ENCODE measurements at regions of chr3 and their contacts with region 1.

Region 1: DNA sequence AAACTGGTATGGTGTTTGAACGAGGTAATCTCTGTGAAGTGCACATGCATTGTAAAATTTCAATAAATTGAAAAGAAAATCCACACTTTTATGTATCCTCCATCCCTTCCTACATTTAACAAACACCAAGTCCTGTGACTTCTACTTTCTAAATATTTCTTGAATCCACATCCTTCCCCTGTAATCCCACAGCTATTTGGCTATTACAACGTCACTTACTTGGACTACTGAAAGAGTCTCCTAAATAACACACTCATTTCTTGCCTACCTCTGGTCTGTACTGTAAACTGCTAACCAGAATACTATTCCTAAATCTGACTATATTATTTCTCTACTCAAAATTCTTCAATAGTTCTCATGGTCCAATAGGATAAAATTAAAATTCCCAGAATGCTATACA is 176.1 kb downstream of the NEK10 start:
- DNase-seq: no peak
- H3K4me3 ChIP-seq: no peak overlapping the region
- H3K4me3 Mint-ChIP-seq: no peak overlapping the region
- H3K27ac Mint-ChIP-seq: no peak overlapping the region
- H3K4me1 ChIP-seq: no peaks in the 10 kb centered on the region
- H3K4me1 Mint-ChIP-seq: no peaks in the 10 kb centered on the region
- H3K27me3 ChIP-seq: no peaks in the 10 kb centered on the region
- H3K27me3 Mint-ChIP-seq: no peaks in the 10 kb centered on the region
- CTCF ChIP-seq: no peak

Region 2: DNA sequence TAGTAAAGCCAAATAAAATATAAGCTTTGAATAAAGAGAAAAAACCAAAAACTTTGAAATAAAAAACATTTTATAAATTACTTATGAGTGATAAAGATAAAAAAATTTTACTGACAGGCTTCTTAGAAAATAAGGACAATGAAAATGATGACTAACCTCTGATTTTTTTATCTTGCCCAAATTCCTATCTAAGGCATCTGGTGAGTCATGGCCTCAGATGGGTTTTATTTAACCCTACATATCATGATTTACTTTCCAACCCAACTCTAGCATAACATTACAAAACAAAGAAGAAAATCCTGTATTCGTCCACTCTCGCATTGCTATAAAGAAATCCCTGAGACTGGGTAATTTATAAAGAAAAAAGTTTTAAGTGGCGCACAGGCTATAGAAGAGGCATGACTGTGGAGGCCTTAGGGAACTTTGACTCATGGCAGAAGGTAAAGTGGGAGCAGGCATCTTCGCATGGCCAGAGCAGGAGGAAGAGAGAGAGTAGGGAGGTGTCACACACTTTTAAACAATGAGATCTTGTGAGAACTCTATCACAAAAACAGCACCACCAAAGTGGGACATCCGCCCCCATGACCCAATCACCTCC is 24.0 kb after region 1 on chr3:
- CTCF ChIA-PET with region 1: no interaction called
- POLR2A ChIA-PET with region 1: no interaction called
- intact Hi-C with region 1: loop called (anchors 1 kb)
- DNase-seq: no peak
- H3K4me3 ChIP-seq: no peak overlapping the region
- H3K4me3 Mint-ChIP-seq: no peak overlapping the region
- H3K27ac Mint-ChIP-seq: no peak overlapping the region
- H3K4me1 ChIP-seq: no peaks in the 10 kb centered on the region
- H3K4me1 Mint-ChIP-seq: no peaks in the 10 kb centered on the region
- H3K27me3 ChIP-seq: no peaks in the 10 kb centered on the region
- H3K27me3 Mint-ChIP-seq: no peaks in the 10 kb centered on the region
- CTCF ChIP-seq: no peak

Region 3: DNA sequence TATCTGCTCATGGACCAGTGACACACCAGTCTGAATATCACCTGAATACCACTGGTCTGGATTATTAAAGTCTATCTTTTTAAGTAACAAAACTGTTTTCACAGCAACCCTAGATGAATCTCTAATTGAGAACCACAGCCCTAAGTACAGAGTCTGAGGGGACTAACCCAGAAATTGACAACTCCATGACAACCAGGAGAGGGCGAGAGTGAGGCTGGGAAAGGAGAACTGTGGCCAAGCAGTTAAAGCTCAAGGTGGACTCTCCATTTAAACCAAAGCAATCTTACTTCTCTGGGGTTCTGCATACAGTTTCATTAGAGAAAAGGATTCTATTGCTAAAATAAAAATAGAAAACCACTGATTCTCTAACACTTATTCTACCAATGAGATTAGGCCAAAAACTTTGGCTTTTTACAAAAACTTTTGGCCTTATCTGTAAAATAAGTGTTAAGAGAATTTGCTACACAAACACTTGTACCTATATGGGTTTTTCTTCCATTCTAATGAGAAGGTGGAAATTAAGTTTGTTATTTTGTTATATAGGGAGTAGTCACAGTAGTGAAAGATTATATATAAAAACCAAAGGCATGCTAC is 164.7 kb after region 1 on chr3:
- CTCF ChIA-PET with region 1: no interaction called
- POLR2A ChIA-PET with region 1: no interaction called
- intact Hi-C with region 1: no loop called
- DNase-seq: peak; percentile 49 to 64
- H3K4me3 ChIP-seq: no peak overlapping the region
- H3K4me3 Mint-ChIP-seq: no peak overlapping the region
- H3K27ac Mint-ChIP-seq: no peak overlapping the region
- H3K4me1 ChIP-seq: no peaks in the 10 kb centered on the region
- H3K4me1 Mint-ChIP-seq: no peaks in the 10 kb centered on the region
- H3K27me3 ChIP-seq: no peaks in the 10 kb centered on the region
- H3K27me3 Mint-ChIP-seq: peaks cover 10% of the 10 kb centered on the region
- CTCF ChIP-seq: peak in 1 of 2 experiments; percentile 73

Measured in Caco-2 (cell line).